A549 (cell line): ENCODE measurements at regions of chr6 and their contacts with region 1.

Region 1: GRCh38 chr6:143940011-143940597 is 68.0 kb downstream of the PLAGL1 start:
- DNase-seq: peak; percentile 65 to 66
- ATAC-seq: peak; percentile 85 to 89
- H3K4me3 ChIP-seq: no peak overlapping the region
- H3K27ac ChIP-seq: no peak overlapping the region
- H3K4me1 ChIP-seq: no peaks in the 10 kb centered on the region
- CTCF ChIP-seq: peak; percentile 62
- EP300 ChIP-seq: no peak
- POLR2A ChIP-seq: no peak
- RAD21 ChIP-seq: peak; percentile 41 to 48; a peak in 3 of 5 replicates

Region 2: DNA sequence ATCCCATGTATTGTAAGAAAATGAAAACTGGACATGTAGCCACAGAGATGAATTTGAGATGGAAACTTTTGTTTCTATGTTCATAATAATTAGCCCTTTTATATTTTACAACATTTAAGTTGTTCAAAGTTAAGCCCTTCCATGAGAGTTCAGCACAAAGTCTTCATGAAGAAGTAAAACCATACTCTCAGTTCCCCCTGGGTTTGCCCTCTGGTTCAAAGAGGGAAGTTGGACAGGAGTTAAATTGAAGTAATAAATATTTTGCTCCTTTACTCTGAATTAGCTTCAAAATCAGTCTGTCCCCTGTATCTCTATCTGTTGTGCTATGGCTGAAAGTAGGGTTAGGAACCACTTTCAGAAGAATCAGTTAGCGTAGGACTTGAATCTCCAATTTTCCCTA is 231.2 kb before region 1 on chr6:
- CTCF ChIA-PET with region 1: no interaction called
- POLR2A ChIA-PET with region 1: no interaction called
- DNase-seq: no peak
- ATAC-seq: no peak
- H3K4me3 ChIP-seq: no peak overlapping the region
- H3K27ac ChIP-seq: no peak overlapping the region
- H3K4me1 ChIP-seq: no peaks in the 10 kb centered on the region
- CTCF ChIP-seq: no peak
- EP300 ChIP-seq: no peak
- POLR2A ChIP-seq: no peak
- RAD21 ChIP-seq: no peak

Region 3: DNA sequence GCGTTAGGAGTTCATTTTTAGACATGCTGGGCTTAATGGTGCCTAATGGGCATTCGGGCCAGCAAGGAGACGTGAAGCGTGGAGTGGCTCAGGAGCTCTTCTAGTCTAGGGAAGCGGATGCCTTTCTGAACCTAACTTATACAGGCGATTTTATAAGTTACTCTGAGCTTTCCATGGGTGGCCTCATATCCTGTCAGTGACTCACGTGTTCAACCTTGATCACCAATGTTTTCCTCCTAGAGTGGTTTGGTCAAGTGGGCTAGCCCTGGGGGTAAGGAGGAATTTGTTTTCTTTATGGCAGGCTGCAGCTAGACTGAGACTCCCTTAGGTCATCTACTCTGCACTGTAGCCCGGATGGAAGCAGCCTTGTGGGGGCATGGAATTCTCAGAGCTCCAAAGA is 15.9 kb after region 1 on chr6:
- CTCF ChIA-PET with region 1: interaction called, 13 read pairs
- POLR2A ChIA-PET with region 1: no interaction called
- DNase-seq: no peak
- ATAC-seq: no peak
- H3K4me3 ChIP-seq: no peak overlapping the region
- H3K27ac ChIP-seq: no peak overlapping the region
- H3K4me1 ChIP-seq: no peaks in the 10 kb centered on the region; the same call in 2 of the 3 replicates
- CTCF ChIP-seq: no peak
- EP300 ChIP-seq: no peak
- POLR2A ChIP-seq: no peak
- RAD21 ChIP-seq: no peak

Region 4: GRCh38 chr6:143982968-143983367 is 42.9 kb after region 1 on chr6:
- CTCF ChIA-PET with region 1: no interaction called
- POLR2A ChIA-PET with region 1: no interaction called
- DNase-seq: no peak
- ATAC-seq: no peak
- H3K4me3 ChIP-seq: no peak overlapping the region
- H3K27ac ChIP-seq: no peak overlapping the region
- H3K4me1 ChIP-seq: no peaks in the 10 kb centered on the region
- CTCF ChIP-seq: no peak
- EP300 ChIP-seq: no peak
- POLR2A ChIP-seq: no peak
- RAD21 ChIP-seq: no peak

Region 5: DNA sequence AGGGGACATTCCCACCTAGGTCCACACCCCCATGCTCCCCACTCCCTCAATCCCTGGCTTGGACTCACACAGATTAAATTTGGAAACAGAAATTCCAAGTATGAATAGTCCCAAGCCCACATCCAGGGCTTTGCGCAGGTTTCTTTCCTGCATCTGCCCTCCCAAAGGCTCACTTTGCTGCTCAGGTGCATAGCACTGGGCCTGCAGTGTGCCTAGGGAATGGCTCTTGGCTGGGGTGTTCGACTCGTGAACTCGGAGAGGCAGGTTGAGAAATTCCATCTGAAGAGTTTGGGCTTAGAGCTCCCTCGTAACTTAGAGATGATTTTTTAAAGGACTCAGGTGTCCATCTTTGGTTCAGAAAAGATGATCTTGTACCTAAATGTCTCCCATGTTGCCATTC is 170.1 kb after region 1 on chr6:
- CTCF ChIA-PET with region 1: no interaction called
- POLR2A ChIA-PET with region 1: no interaction called
- DNase-seq: no peak
- ATAC-seq: no peak
- H3K4me3 ChIP-seq: no peak overlapping the region
- H3K27ac ChIP-seq: no peak overlapping the region
- H3K4me1 ChIP-seq: no peaks in the 10 kb centered on the region
- CTCF ChIP-seq: no peak
- EP300 ChIP-seq: no peak
- POLR2A ChIP-seq: no peak
- RAD21 ChIP-seq: no peak